Activated CD8-positive, alpha-beta T cell treated with anti-CD3 and anti-CD28 coated beads, Interleukin-2, amount 10 ng/mL, durations not matched to agents 7 days and 5 days (primary cell): ENCODE measurements at regions of chr1 and their contacts with region 1.

Region 1: DNA sequence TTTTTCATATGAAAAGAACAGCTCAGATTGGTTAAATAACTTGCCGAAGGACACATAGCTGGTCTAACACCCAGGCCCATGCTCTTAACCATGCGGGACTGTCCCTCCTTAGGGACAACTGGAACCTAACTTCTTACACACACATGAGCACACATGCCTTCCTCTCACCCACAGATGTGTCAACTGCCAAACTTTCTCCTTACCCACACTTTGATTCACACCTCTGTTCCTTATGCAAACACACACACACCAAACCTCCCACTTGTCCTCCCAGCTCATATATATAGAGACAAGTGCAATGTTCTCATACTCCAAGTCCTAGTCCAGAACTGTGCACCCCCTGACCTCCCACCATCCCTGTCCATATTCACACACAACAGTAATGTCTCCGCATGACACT is 4.3 kb downstream of the RAB25 start:
- DNase-seq: no peak
- ATAC-seq: no peak
- H3K4me3 Mint-ChIP-seq: no peak overlapping the region
- H3K27ac Mint-ChIP-seq: no peak overlapping the region
- H3K4me1 Mint-ChIP-seq: peaks cover 10% of the 10 kb centered on the region
- H3K27me3 Mint-ChIP-seq: no peaks in the 10 kb centered on the region

Region 2: GRCh38 chr1:155940531-155940992 is 124.7 kb before region 1 on chr1:
- CTCF ChIA-PET with region 1: interaction called, 25 read pairs
- POLR2A ChIA-PET with region 1: no interaction called
- DNase-seq: no peak
- ATAC-seq: peak; percentile 16
- H3K4me3 Mint-ChIP-seq: peak overlapping the region; percentile 47
- H3K27ac Mint-ChIP-seq: peak overlapping the region; percentile 94
- H3K4me1 Mint-ChIP-seq: peaks cover 60% of the 10 kb centered on the region
- H3K27me3 Mint-ChIP-seq: no peaks in the 10 kb centered on the region

Region 3: DNA sequence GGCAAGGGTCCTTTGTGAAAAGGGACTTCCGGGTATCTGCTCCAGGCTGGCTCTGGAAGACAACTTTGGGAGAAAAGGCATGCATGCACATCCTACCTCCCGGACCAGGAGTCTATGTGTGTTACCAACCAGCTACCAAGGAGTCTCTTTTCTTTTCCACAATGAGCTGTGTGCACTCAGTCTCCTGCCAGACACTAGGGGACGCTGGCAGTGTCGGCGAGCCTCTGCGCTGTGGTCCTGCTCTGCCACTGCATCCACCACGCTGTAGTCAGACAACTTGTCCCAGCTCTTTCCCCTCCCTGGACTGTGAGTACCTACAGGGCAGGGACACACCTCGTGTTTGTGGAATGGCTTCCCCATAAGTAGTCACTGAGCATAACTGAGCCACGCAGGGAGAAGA is 39.3 kb before region 1 on chr1:
- CTCF ChIA-PET with region 1: interaction called, 16 read pairs
- POLR2A ChIA-PET with region 1: no interaction called
- DNase-seq: peak; percentile 58
- ATAC-seq: peak; percentile 86
- H3K4me3 Mint-ChIP-seq: no peak overlapping the region
- H3K27ac Mint-ChIP-seq: no peak overlapping the region
- H3K4me1 Mint-ChIP-seq: peaks cover 18% of the 10 kb centered on the region
- H3K27me3 Mint-ChIP-seq: peaks cover 13% of the 10 kb centered on the region

Region 4: GRCh38 chr1:156053770-156054499 is 11.3 kb before region 1 on chr1 and contains the start of gene UBQLN4:
- CTCF ChIA-PET with region 1: interaction called, 12 read pairs
- POLR2A ChIA-PET with region 1: no interaction called
- DNase-seq: peak; percentile 90
- ATAC-seq: peak; percentile 55
- H3K4me3 Mint-ChIP-seq: peak within 1 kb of the TSS; percentile 96
- H3K27ac Mint-ChIP-seq: peak within 1 kb of the TSS; percentile 91
- H3K4me1 Mint-ChIP-seq: peaks cover 23% of the 10 kb centered on the region
- H3K27me3 Mint-ChIP-seq: no peaks in the 10 kb centered on the region
- total RNA-seq, gene UBQLN4: 32.8 to 33.3 TPM